AG04449 (cell line): ENCODE measurements at regions of chr22 and their contacts with region 1.

Region 1: GRCh38 chr22:29245637-29246385 is 22.0 kb downstream of the RHBDD3 start:
- DNase-seq: no peak
- H3K4me3 ChIP-seq: no peak overlapping the region
- CTCF ChIP-seq: peak; percentile 97

Region 2: DNA sequence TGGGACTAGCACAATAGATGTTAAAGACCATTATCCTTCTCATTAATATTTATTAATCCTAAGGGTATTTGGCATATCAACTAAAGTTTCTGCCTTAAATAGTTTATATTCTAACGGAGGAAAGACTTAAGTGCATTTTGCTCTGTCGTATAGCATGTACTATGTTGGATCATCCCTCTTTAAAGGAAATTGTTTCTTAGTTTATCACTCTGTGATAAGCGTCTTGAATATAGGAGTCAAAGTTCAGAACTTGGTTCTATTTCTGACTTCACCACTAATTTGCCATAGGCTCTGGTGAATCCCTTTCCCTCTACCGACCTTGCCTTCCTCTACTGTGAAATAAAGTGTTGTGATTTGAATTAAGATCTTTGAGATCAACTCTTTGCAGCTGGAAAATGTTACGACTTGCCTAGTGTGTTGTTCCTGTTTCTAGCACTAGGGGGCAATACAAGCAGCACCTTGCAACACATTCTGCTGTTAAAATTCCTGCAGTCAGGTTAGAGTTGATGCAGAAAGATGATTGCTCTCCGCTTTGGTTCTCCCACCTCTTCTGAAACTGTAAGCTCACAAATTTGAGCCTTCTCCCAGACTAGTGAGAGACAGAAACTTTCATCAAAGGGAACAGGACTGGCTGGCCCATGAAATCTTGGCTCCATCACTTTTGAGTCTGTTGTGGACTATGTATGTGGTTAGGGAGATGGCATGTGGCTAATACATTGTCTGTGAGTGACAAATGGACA is 390.3 kb before region 1 on chr22:
- CTCF ChIA-PET with region 1: interaction called, 14 read pairs
- POLR2A ChIA-PET with region 1: no interaction called
- DNase-seq: peak; percentile 14
- H3K4me3 ChIP-seq: no peak overlapping the region
- CTCF ChIP-seq: peak; percentile 82

Region 3: DNA sequence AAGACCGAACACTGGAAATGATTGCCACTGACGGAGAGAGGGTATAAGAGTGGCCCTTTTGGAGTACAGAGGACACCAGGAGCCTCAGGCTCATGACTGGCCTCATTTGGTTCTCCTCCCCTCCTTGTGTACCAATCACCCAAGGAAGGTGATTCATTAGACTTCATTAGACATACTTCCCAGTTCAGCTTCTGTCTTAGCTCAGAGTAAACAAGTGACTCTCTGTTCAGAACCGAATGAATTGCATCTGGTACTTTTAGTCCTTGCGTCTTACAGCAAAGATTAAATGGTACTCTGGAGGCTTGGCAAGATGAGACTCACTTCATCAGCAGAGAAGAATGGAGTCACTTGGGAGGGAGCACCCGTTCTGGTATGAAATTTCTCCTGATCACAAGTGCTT is 287.2 kb before region 1 on chr22:
- CTCF ChIA-PET with region 1: no interaction called
- POLR2A ChIA-PET with region 1: no interaction called
- DNase-seq: no peak
- H3K4me3 ChIP-seq: no peak overlapping the region
- CTCF ChIP-seq: no peak

Region 4: DNA sequence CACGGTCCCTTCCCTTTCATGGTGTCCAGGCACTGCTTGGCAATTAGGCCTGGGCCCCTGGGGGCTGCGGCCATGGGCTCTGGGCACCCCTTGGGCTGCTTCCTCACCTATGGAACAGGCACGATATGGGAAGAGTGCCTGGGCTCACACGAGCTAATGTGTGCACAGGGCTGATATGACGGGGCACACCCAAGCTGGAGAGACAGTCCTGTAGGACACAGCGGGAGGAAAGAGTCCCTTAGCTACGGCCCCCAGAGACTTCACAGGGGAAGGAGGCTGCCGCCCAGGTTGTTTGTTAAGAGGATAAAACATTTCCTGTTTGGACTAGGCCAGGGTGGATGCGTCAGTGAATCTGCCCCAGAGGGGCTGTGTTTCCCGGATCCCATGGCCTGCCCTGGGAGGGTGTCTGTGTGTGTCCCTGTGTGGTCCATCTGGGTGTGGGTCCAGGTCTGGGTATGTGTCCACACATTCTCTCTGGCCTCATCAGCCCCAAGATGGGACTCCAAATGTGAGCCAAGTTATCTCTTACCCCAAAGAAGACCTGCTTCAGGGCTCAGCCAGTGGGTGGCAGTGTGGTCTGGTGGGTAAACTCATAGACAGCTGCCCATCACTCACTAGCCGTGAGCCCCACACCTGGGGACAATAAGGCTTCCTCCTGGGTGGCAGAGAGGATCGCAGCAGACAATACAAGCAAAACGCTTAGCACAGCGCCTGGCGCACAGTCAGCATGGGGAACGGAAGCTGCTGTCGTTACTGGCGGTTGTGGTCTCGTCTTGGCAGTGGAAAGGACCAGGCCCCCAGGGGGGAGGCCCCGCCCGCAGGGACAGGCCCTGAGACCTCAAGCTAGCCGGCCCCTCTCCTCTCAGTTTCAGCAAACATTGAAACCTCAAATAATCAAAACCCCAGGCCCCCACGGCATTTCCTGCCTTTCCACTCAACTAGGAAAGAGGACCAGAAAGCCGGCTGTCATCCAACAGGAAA is 43.3 kb before region 1 on chr22:
- CTCF ChIA-PET with region 1: interaction called, 10 read pairs
- POLR2A ChIA-PET with region 1: no interaction called
- DNase-seq: no peak
- H3K4me3 ChIP-seq: no peak overlapping the region
- CTCF ChIP-seq: peak; percentile 41

Region 5: GRCh38 chr22:29231971-29232959 is 13.5 kb before region 1 on chr22:
- CTCF ChIA-PET with region 1: interaction called, 41 read pairs
- POLR2A ChIA-PET with region 1: no interaction called
- DNase-seq: no peak
- H3K4me3 ChIP-seq: no peak overlapping the region
- CTCF ChIP-seq: no peak

Region 6: GRCh38 chr22:29267858-29268417 is 22.1 kb after region 1 on chr22 and contains the starts of genes EWSR1 and RHBDD3:
- CTCF ChIA-PET with region 1: interaction called, 25 read pairs
- POLR2A ChIA-PET with region 1: interaction called, 3 read pairs
- DNase-seq: peak; percentile 84
- H3K4me3 ChIP-seq: peak within 1 kb of the TSS; percentile 89
- CTCF ChIP-seq: no peak

Region 7: DNA sequence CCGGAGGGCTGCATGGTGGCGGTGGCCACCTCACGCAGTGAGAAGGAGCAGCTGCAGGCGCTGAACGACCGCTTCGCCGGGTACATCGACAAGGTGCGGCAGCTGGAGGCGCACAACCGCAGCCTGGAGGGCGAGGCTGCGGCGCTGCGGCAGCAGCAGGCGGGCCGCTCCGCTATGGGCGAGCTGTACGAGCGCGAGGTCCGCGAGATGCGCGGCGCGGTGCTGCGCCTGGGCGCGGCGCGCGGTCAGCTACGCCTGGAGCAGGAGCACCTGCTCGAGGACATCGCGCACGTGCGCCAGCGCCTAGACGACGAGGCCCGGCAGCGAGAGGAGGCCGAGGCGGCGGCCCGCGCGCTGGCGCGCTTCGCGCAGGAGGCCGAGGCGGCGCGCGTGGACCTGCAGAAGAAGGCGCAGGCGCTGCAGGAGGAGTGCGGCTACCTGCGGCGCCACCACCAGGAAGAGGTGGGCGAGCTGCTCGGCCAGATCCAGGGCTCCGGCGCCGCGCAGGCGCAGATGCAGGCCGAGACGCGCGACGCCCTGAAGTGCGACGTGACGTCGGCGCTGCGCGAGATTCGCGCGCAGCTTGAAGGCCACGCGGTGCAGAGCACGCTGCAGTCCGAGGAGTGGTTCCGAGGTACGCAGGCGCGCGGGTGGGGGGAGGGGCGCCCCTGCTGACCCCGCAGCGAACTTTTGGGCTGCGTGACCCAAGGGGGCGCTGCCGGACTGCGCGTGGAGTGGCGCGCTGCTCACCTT is 234.9 kb after region 1 on chr22:
- CTCF ChIA-PET with region 1: no interaction called
- POLR2A ChIA-PET with region 1: no interaction called
- DNase-seq: no peak
- H3K4me3 ChIP-seq: peak overlapping the region; percentile 49
- CTCF ChIP-seq: no peak